ENCODE measurements at regions of chr1 and their contacts with region 1.

Region 1: DNA sequence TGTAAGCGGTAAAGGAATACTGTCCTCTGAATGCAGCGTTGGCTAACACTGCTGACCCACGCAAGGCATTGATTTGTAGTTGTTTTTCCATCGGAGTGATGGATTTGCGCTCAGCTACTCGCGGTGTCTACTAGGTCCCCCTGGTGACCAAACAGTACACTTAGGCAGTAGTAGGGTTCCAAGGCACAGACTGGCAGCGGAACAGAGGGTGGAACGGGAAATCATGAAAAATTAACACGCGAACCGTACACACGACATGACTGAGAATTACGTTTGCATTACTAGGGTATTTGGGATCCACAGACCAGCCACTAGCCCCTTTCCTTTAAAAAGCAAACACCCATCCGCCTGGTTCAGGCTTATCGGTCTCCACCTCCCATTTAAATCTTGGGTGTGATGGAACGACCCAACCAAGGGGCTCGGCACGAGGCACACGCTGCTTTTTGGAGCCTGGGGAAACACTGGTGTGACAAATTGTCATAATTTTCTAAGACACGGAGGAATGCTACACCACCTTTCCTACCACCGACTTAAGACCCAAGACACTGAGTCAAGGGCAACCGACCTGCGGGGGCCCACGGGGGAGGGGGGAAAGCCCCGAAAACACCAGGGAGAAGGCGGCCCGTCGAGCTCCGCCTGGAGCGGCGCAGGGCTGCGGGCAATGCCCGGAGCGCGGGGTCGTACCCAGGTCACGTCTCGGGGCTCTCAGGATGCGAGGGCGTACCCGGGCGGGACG is 699 bp downstream of the DIPK1A start:
- DNase-seq: peak; percentile 86
- ATAC-seq: peak; percentile 42
- H3K4me3 ChIP-seq: peak overlapping the region; percentile 77 to 91 (median 86)
- H3K4me3 Mint-ChIP-seq: peak overlapping the region; percentile 92
- H3K27ac ChIP-seq: peak overlapping the region; percentile 87 to 98
- H3K27ac Mint-ChIP-seq: peak overlapping the region; percentile 94
- H3K4me1 ChIP-seq: peaks cover 62 to 80% of the 10 kb centered on the region in 2 donors
- H3K4me1 Mint-ChIP-seq: peaks cover 44% of the 10 kb centered on the region
- H3K27me3 ChIP-seq: no peaks in the 10 kb centered on the region
- H3K27me3 Mint-ChIP-seq: no peaks in the 10 kb centered on the region
- CTCF ChIP-seq: peak; percentile 66

Region 2: GRCh38 chr1:91673613-91674012 is 1287.0 kb before region 1 on chr1:
- CTCF ChIA-PET with region 1: no interaction called
- POLR2A ChIA-PET with region 1: no interaction called
- intact Hi-C with region 1: no loop called
- DNase-seq: no peak
- ATAC-seq: no peak
- H3K4me3 ChIP-seq: no peak overlapping the region
- H3K4me3 Mint-ChIP-seq: no peak overlapping the region
- H3K27ac ChIP-seq: no peak overlapping the region
- H3K27ac Mint-ChIP-seq: no peak overlapping the region
- H3K4me1 ChIP-seq: no peaks in the 10 kb centered on the region
- H3K4me1 Mint-ChIP-seq: no peaks in the 10 kb centered on the region
- H3K27me3 ChIP-seq: no peaks in the 10 kb centered on the region
- H3K27me3 Mint-ChIP-seq: peaks cover 4% of the 10 kb centered on the region
- CTCF ChIP-seq: no peak

Region 3: GRCh38 chr1:92831762-92832536 is 128.6 kb before region 1 on chr1 and contains the start of gene RPL5:
- CTCF ChIA-PET with region 1: interaction called, 14 read pairs
- POLR2A ChIA-PET with region 1: interaction called, 17 read pairs
- intact Hi-C with region 1: no loop called
- DNase-seq: peak; percentile 100
- ATAC-seq: peak; percentile 88
- H3K4me3 ChIP-seq: peak within 1 kb of the TSS; percentile 84 to 98 (median 92)
- H3K4me3 Mint-ChIP-seq: peak within 1 kb of the TSS; percentile 100
- H3K27ac ChIP-seq: peak within 1 kb of the TSS; percentile 90 to 96
- H3K27ac Mint-ChIP-seq: peak within 1 kb of the TSS; percentile 100
- H3K4me1 ChIP-seq: peaks cover 25 to 28% of the 10 kb centered on the region in 2 donors
- H3K4me1 Mint-ChIP-seq: peaks cover 47% of the 10 kb centered on the region
- H3K27me3 ChIP-seq: no peaks in the 10 kb centered on the region
- H3K27me3 Mint-ChIP-seq: no peaks in the 10 kb centered on the region
- CTCF ChIP-seq: peak; percentile 89
- total RNA-seq, gene RPL5: 1,049 and 1,104 TPM in 2 replicates

Region 4: DNA sequence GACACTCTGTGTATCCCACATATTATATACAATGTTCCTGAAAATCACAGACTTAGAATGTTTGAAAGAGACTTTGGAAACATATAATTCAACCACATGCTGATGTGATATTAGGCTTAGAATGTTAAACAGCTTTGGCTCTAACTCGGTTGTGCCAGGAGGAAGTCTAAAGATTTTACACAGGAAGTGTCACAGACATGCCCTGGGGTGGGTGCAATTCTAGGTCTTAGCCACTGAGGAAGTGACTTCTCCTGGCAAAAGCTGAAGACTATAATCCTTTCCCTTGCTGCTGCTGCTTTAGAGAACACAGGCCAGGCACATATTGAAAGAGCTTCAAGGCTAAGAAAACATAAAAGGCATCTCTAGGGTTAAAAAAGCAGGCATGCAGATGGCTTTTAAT is 77.7 kb before region 1 on chr1:
- CTCF ChIA-PET with region 1: interaction called, 22 read pairs
- POLR2A ChIA-PET with region 1: interaction called, 3 read pairs
- intact Hi-C with region 1: no loop called
- DNase-seq: peak; percentile 43
- ATAC-seq: peak; percentile 54
- H3K4me3 ChIP-seq: no peak overlapping the region
- H3K4me3 Mint-ChIP-seq: peak overlapping the region; percentile 40
- H3K27ac ChIP-seq: peak overlapping the region in 1 of 2 donors; percentile 76
- H3K27ac Mint-ChIP-seq: peak overlapping the region; percentile 83
- H3K4me1 ChIP-seq: peaks cover 22 to 25% of the 10 kb centered on the region in 2 donors
- H3K4me1 Mint-ChIP-seq: peaks cover 45% of the 10 kb centered on the region
- H3K27me3 ChIP-seq: no peaks in the 10 kb centered on the region
- H3K27me3 Mint-ChIP-seq: no peaks in the 10 kb centered on the region
- CTCF ChIP-seq: no peak

Region 5: GRCh38 chr1:92944901-92945747 is 15.4 kb before region 1 on chr1:
- CTCF ChIA-PET with region 1: interaction called, 24 read pairs
- POLR2A ChIA-PET with region 1: interaction called, 5 read pairs
- intact Hi-C with region 1: loop called (anchors 2 kb)
- DNase-seq: peak; percentile 51
- ATAC-seq: peak; percentile 53
- H3K4me3 ChIP-seq: peak overlapping the region in 2 of 5 experiments; percentile 5 to 50
- H3K4me3 Mint-ChIP-seq: peak overlapping the region; percentile 71
- H3K27ac ChIP-seq: peak overlapping the region; percentile 73 to 85
- H3K27ac Mint-ChIP-seq: peak overlapping the region; percentile 82
- H3K4me1 ChIP-seq: peaks cover 68 to 72% of the 10 kb centered on the region in 2 donors
- H3K4me1 Mint-ChIP-seq: peaks cover 66% of the 10 kb centered on the region
- H3K27me3 ChIP-seq: no peaks in the 10 kb centered on the region
- H3K27me3 Mint-ChIP-seq: no peaks in the 10 kb centered on the region
- CTCF ChIP-seq: no peak

Region 6: DNA sequence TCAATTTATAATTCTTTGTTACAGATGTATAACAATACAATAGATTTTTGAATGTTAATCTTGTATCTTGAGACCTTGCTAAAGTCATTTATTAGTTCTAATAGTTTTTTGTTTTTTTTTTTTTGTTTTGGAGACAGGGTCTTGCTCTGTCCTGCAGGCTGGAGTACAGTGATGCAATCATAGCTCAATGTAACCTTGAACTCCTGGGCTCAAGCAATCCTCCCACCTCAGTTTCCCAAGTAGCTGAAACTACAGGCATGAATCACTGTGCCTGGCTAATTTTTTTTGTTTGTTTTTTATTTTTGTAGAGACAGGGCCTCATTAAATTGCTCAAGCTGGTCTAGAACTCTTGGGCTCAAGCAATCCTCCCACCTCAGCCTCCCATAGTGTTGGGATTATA is 26.9 kb after region 1 on chr1:
- CTCF ChIA-PET with region 1: interaction called, 295 read pairs
- POLR2A ChIA-PET with region 1: interaction called, 32 read pairs
- intact Hi-C with region 1: no loop called
- DNase-seq: no peak
- ATAC-seq: no peak
- H3K4me3 ChIP-seq: no peak overlapping the region
- H3K4me3 Mint-ChIP-seq: no peak overlapping the region
- H3K27ac ChIP-seq: no peak overlapping the region
- H3K27ac Mint-ChIP-seq: no peak overlapping the region
- H3K4me1 ChIP-seq: peaks cover 29% of the 10 kb centered on the region in 2 donors
- H3K4me1 Mint-ChIP-seq: peaks cover 37% of the 10 kb centered on the region
- H3K27me3 ChIP-seq: no peaks in the 10 kb centered on the region
- H3K27me3 Mint-ChIP-seq: no peaks in the 10 kb centered on the region
- CTCF ChIP-seq: no peak

Region 7: DNA sequence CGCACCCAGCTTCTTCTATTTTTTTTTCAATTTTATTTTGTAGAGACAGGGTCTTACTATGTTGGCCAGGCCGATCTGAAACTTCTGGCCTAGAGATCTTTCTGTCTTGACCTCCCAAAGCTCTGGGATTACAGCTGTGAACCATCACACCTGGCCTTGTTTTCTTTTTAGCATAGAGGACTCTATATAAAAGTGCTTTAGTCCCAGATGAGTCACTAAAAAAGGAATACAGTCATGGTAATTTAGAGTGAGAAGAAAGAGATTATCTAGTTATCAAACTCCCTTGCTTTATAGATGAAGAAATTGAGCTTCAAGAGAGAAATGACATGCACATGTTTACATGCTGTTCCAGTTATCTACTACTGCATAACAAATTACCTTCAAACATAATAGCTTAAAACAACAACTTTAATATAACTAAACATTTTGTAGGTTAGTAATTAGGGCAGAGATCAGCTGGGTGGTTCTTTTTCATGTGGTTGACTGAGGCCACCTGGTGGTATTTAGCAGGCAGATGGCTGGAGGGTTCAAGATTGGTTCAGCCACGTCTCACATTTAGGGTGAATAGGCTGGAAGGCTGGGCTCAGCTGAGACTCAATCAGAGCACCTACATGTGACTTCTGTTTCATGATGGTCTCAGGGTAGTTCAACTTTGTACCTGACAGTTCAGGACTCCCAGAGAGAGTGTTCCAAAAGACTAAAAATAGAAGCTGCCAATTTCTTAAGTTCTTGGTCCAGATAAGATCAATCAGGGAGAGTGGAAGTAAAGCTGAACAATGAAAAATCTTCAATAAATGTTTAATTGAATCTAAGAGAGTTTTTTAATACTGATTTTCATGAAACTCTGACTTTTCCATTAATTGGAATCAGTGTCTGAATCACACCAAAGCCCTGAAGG is 101.6 kb after region 1 on chr1:
- CTCF ChIA-PET with region 1: interaction called, 16 read pairs
- POLR2A ChIA-PET with region 1: no interaction called
- intact Hi-C with region 1: no loop called
- DNase-seq: peak; percentile 68
- ATAC-seq: peak; percentile 69
- H3K4me3 ChIP-seq: no peak overlapping the region
- H3K4me3 Mint-ChIP-seq: no peak overlapping the region
- H3K27ac ChIP-seq: no peak overlapping the region
- H3K27ac Mint-ChIP-seq: no peak overlapping the region
- H3K4me1 ChIP-seq: no peaks in the 10 kb centered on the region
- H3K4me1 Mint-ChIP-seq: no peaks in the 10 kb centered on the region
- H3K27me3 ChIP-seq: peaks cover 0 to 5% (median 0%) of the 10 kb centered on the region in 4 experiments
- H3K27me3 Mint-ChIP-seq: peaks cover 24% of the 10 kb centered on the region
- CTCF ChIP-seq: peak; percentile 68

Region 8: DNA sequence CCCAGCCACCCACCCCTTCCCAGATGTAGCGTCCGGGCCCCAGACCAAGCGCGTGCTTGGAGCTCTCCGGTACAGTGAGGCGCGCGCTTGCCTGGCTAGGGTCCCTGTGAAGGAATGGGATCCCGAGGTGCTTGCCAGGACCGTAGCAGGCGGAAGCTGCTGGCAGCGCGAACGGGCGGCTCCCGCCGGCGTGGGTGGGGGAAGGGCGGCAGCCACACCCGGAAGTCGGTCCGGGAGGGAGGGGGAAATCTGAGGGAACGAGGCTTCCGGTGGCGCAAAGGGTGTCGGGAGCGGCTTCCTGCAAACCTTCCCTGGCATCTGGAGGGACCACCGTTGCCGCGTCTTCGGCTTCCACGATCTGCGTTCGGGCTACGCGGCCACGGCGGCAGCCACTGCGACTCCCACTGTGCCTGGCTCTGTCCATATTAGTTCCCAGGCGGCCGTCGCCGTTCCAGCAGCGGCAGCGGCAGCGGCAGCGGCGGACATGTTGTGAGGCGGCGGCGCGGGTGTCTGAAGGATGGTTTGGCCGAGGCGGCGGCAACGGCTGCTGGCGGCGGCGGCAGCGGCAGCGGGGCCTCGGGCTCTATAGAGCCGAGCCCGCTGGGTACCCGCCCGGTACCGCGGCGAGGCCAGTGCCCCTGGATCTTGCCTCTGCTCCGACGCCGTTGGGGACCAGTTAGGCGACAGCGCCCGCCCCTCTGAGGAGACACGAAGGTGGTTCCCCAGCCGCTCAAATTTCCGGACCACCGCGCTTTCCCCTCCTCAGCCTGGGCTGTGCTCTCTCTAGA is 385.3 kb after region 1 on chr1 and contains the start of gene DR1:
- CTCF ChIA-PET with region 1: interaction called, 3 read pairs
- POLR2A ChIA-PET with region 1: interaction called, 3 read pairs
- intact Hi-C with region 1: loop called (anchors 10 kb)
- DNase-seq: peak; percentile 93
- ATAC-seq: peak; percentile 84
- H3K4me3 ChIP-seq: peak within 1 kb of the TSS; percentile 78 to 94 (median 91)
- H3K4me3 Mint-ChIP-seq: peak within 1 kb of the TSS; percentile 95
- H3K27ac ChIP-seq: peak within 1 kb of the TSS; percentile 81 to 95
- H3K27ac Mint-ChIP-seq: peak within 1 kb of the TSS; percentile 98
- H3K4me1 ChIP-seq: peaks cover 12 to 40% of the 10 kb centered on the region in 2 donors
- H3K4me1 Mint-ChIP-seq: peaks cover 50% of the 10 kb centered on the region
- H3K27me3 ChIP-seq: no peaks in the 10 kb centered on the region
- H3K27me3 Mint-ChIP-seq: no peaks in the 10 kb centered on the region
- CTCF ChIP-seq: no peak
- total RNA-seq, gene DR1: 65.6 and 69.2 TPM in 2 replicates

Measured in B cell (primary cell).